Transverse colon (tissue), 4 donors: ENCODE measurements at regions of chr7 and their contacts with region 1.

Region 1: DNA sequence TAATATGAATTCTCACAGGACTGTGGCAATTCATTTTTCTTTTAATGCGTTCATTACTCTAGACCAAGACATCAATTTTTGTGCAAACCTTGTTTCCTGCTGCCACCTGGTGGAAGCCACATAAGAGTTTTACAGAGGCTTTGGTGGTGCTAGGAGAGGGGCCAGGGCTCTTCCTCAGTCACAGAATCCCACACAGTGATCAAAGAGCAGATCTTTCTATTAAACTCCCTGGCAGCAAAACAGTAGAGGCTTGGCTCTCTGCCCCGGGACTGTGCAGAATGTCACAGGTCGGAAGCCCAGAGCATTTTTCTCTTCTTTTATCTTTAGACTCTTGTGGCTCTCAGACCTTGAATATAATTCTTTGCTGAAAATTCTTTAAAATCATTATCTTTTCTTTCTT is 506.4 kb upstream of the C7orf33 start:
- DNase-seq: peak; percentile 46
- H3K4me3 ChIP-seq: no peak overlapping the region
- H3K27ac ChIP-seq: no peak overlapping the region
- H3K4me1 ChIP-seq: no peaks in the 10 kb centered on the region
- H3K27me3 ChIP-seq: no peaks in the 10 kb centered on the region
- CTCF ChIP-seq: peak; percentile 38 to 52 (median 47)
- EP300 ChIP-seq: no peak
- POLR2A ChIP-seq: no peak

Region 2: GRCh38 chr7:147245292-147245691 is 838.8 kb before region 1 on chr7:
- in situ Hi-C with region 1: loop called (anchors 10 to 25 kb)
- intact Hi-C with region 1: no loop called
- DNase-seq: peak; percentile 12
- H3K4me3 ChIP-seq: no peak overlapping the region
- H3K27ac ChIP-seq: no peak overlapping the region
- H3K4me1 ChIP-seq: no peaks in the 10 kb centered on the region
- H3K27me3 ChIP-seq: no peaks in the 10 kb centered on the region
- CTCF ChIP-seq: peak; percentile 43 to 56 (median 49)
- EP300 ChIP-seq: no peak
- POLR2A ChIP-seq: no peak

Region 3: GRCh38 chr7:147547249-147547897 is 536.8 kb before region 1 on chr7:
- in situ Hi-C with region 1: loop called in 2 of 4 experiments (anchors 10 to 25 kb)
- intact Hi-C with region 1: no loop called
- DNase-seq: peak; percentile 10
- H3K4me3 ChIP-seq: no peak overlapping the region
- H3K27ac ChIP-seq: no peak overlapping the region
- H3K4me1 ChIP-seq: no peaks in the 10 kb centered on the region
- H3K27me3 ChIP-seq: no peaks in the 10 kb centered on the region
- CTCF ChIP-seq: peak in 3 of 5 experiments; percentile 36 to 42 (median 41)
- EP300 ChIP-seq: no peak
- POLR2A ChIP-seq: no peak